Sigmoid colon (tissue), 7 donors: ENCODE measurements at regions of chr10 and their contacts with region 1.

Region 1: DNA sequence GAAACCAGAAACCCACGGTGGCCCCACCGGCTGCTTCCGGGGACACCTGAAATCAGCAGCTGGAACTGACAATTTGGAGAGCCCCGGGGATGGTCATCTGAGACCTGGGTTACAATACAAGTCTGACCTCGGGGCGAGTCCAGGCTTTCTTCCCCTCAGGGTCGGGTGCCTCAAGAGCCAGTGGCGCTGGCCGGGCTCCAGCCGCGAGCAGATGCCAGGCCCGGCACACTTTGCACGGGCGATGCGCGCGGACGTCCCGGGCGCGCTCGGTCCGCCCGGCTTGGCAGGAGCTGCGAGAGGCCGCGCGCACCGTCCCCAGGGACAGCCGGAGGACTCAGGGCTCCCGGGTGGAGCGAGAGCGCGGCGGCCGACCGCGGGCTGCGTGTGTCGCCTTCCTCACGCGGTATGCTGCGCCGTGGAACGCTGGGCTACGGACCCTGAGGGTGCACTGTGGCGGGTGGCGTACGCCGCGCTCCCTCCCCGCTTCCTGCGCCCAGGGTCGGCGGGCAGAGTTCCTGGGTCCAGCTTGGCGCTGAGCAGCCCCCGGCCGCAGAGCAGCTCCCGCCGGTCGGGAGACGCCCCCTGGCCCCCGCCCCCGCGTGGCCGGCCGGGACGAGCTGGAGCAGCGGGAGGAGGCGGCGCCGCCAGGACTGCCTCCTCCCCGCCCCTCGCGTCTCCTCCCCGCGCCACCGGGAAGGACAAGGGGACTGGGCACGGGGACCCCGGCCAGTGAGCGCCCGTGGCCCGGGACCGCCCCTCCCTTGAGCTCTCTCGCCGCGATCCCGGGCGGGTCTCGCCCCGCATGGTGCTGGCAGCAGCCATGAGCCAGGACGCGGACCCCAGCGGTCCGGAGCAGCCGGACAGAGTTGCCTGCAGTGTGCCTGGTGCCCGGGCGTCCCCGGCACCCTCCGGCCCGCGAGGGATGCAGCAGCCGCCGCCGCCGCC is at the start of gene RBM20:
- DNase-seq: peak; percentile 69
- H3K4me3 ChIP-seq: peak within 1 kb of the TSS; percentile 57 to 84 (median 66)
- H3K27ac ChIP-seq: peak within 1 kb of the TSS; percentile 74 to 91 (median 85)
- H3K4me1 ChIP-seq: peaks cover 0 to 36% (median 28%) of the 10 kb centered on the region in 4 donors
- H3K27me3 ChIP-seq: peaks cover 14 to 57% (median 18%) of the 10 kb centered on the region in 3 donors
- CTCF ChIP-seq: no peak
- EP300 ChIP-seq: no peak
- POLR2A ChIP-seq: no peak
- total RNA-seq, gene RBM20: 4.9 to 7.8 (median 6.0) TPM

Region 2: DNA sequence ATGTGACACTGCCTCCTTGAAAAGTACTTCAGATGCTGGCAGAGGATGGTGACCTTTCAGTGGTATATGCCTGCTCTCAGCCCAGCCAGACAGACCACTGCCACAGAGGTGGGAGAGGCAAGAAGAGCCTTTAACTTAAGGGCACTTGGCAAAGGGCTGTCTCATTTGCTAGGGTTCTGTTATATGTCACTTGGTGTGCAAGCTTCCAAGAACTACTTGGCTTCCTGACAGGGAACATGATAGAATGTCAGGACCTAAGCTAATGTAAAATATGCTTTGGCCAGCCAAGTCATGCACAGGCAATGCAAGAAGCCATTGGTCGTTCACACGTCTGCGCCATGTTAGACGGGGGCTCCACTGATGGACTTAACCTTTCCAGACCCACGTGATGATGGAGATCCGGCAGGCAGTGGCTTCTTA is 54.9 kb after region 1 on chr10:
- intact Hi-C with region 1: loop called (anchors 5 kb)
- DNase-seq: peak; percentile 79
- H3K4me3 ChIP-seq: no peak overlapping the region
- H3K27ac ChIP-seq: peak overlapping the region in 3 of 4 donors; percentile 68 to 79 (median 78)
- H3K4me1 ChIP-seq: peaks cover 0 to 41% (median 35%) of the 10 kb centered on the region in 4 donors
- H3K27me3 ChIP-seq: no peaks in the 10 kb centered on the region
- CTCF ChIP-seq: no peak
- EP300 ChIP-seq: peak in 3 of 4 donors; percentile 49 to 83 (median 68)
- POLR2A ChIP-seq: no peak

Region 3: GRCh38 chr10:110820321-110820814 is 176.4 kb after region 1 on chr10:
- intact Hi-C with region 1: loop called (anchors 10 kb)
- DNase-seq: peak; percentile 95
- H3K4me3 ChIP-seq: no peak overlapping the region
- H3K27ac ChIP-seq: peak overlapping the region; percentile 79 to 90 (median 85)
- H3K4me1 ChIP-seq: peaks cover 0 to 84% (median 81%) of the 10 kb centered on the region in 4 donors
- H3K27me3 ChIP-seq: no peaks in the 10 kb centered on the region
- CTCF ChIP-seq: no peak
- EP300 ChIP-seq: peak; percentile 15 to 81 (median 50)
- POLR2A ChIP-seq: no peak

Region 4: DNA sequence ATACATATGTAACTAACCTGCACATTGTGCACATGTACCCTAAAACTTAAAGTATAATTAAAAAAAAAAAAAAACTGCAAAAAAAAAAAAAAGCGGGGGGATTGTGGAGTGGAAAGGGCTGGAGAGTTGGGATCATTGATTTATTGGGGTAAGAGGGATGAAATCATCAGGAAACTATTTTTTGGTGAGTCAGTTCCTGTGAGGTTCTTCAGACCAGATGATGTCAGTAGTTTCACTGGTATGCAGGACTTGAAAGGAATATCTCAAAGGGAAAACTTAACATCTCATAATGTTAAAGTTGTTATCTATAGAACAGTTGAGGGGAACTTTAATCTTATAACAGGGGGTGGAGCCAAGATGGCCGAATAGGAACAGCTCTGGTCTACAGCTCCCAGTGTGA is 1606.6 kb after region 1 on chr10:
- intact Hi-C with region 1: no loop called
- DNase-seq: no peak
- H3K4me3 ChIP-seq: no peak overlapping the region
- H3K27ac ChIP-seq: no peak overlapping the region
- H3K4me1 ChIP-seq: no peaks in the 10 kb centered on the region
- H3K27me3 ChIP-seq: no peaks in the 10 kb centered on the region
- CTCF ChIP-seq: no peak
- EP300 ChIP-seq: no peak
- POLR2A ChIP-seq: no peak